ENCODE measurements at regions of chr5 and their contacts with region 1.

Region 1: GRCh38 chr5:57221049-57221568 is 47.2 kb downstream of the GPBP1 start:
- DNase-seq: peak; percentile 42
- ATAC-seq: peak; percentile 82
- H3K4me3 ChIP-seq: no peak overlapping the region
- H3K27ac ChIP-seq: no peak overlapping the region
- H3K4me1 ChIP-seq: no peaks in the 10 kb centered on the region
- H3K27me3 ChIP-seq: no peaks in the 10 kb centered on the region
- CTCF ChIP-seq: peak; percentile 66 to 75 (median 67)
- EP300 ChIP-seq: no peak
- POLR2A ChIP-seq: no peak
- RAD21 ChIP-seq: peak; percentile 93

Region 2: GRCh38 chr5:56900858-56901578 is 320.1 kb before region 1 on chr5:
- CTCF ChIA-PET with region 1: interaction called, 21 read pairs
- POLR2A ChIA-PET with region 1: no interaction called
- RAD21 ChIA-PET with region 1: interaction called, 6 read pairs
- SMC1A ChIA-PET with region 1: interaction called, 14 read pairs
- in situ Hi-C with region 1: loop called (anchors 5 kb)
- intact Hi-C with region 1: loop called (anchors 1 kb)
- DNase-seq: no peak
- ATAC-seq: peak; percentile 88
- H3K4me3 ChIP-seq: no peak overlapping the region
- H3K27ac ChIP-seq: no peak overlapping the region
- H3K4me1 ChIP-seq: no peaks in the 10 kb centered on the region
- H3K27me3 ChIP-seq: no peaks in the 10 kb centered on the region; a peak in 1 of 4 replicates
- CTCF ChIP-seq: peak; percentile 60 to 83 (median 75); a peak in 5 of 6 replicates
- EP300 ChIP-seq: no peak
- POLR2A ChIP-seq: no peak
- RAD21 ChIP-seq: peak; percentile 89

Region 3: GRCh38 chr5:56909294-56910209 is 311.6 kb before region 1 on chr5 and contains the start of gene SETD9:
- CTCF ChIA-PET with region 1: interaction called, 10 read pairs
- POLR2A ChIA-PET with region 1: no interaction called
- RAD21 ChIA-PET with region 1: interaction called, 3 read pairs
- SMC1A ChIA-PET with region 1: interaction called, 10 read pairs
- in situ Hi-C with region 1: loop called (anchors 5 kb)
- intact Hi-C with region 1: loop called (anchors 2 kb)
- DNase-seq: peak; percentile 86
- ATAC-seq: peak; percentile 90
- H3K4me3 ChIP-seq: peak within 1 kb of the TSS; percentile 79
- H3K27ac ChIP-seq: peak within 1 kb of the TSS; percentile 91
- H3K4me1 ChIP-seq: peaks cover 7% of the 10 kb centered on the region
- H3K27me3 ChIP-seq: no peaks in the 10 kb centered on the region
- CTCF ChIP-seq: no peak
- EP300 ChIP-seq: no peak
- POLR2A ChIP-seq: peak; percentile 98
- RAD21 ChIP-seq: no peak
- polyA plus RNA-seq, gene SETD9: 12.9 to 17.1 TPM

Region 4: DNA sequence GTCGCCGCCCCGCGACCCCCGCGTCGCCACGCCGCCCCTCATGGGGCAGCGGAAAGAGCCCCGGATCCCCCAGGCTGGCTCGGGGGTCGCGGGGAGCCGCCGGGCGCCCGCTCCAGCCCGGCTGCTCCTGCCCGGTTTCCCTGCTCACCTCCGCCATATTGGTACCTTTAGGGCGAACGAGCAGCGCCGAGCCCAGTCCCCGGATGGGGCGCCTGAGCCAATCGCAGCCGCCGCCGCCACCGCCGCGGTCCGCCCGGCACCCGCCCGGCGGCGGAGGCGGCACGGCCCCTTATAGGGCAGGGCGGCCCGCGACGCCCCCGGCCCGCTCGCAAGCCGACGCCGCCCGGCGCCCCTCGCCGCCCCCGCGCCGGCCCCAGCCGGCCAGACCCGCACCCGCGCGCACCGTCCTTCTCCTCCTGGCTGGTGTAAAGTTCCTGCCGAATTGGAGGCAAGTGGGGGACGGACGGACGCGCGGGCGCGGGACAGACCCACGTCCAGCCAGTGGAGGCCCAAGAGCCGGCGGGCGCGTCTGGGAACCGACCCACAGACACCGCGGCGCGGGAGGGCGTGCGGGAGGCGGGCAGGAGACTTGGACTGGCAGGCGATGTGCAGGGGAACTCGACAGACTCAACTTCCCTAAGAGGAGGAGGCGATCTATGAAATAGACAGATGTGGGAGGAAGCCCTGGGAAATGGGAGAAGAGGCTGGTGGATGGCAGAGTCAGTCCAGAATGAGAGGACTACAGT is 269.0 kb before region 1 on chr5 and contains the start of gene MIER3:
- CTCF ChIA-PET with region 1: interaction called, 3 read pairs
- POLR2A ChIA-PET with region 1: interaction called, 4 read pairs
- RAD21 ChIA-PET with region 1: interaction called, 3 read pairs
- SMC1A ChIA-PET with region 1: interaction called, 3 read pairs
- in situ Hi-C with region 1: no loop called
- intact Hi-C with region 1: loop called (anchors 5 kb)
- DNase-seq: no peak
- ATAC-seq: peak; percentile 90
- H3K4me3 ChIP-seq: peak within 1 kb of the TSS; percentile 90
- H3K27ac ChIP-seq: peak within 1 kb of the TSS; percentile 63
- H3K4me1 ChIP-seq: no peaks in the 10 kb centered on the region
- H3K27me3 ChIP-seq: no peaks in the 10 kb centered on the region; a peak in 1 of 4 replicates
- CTCF ChIP-seq: no peak
- EP300 ChIP-seq: no peak
- POLR2A ChIP-seq: peak; percentile 83
- RAD21 ChIP-seq: no peak
- polyA plus RNA-seq, gene MIER3: 2.9 to 3.5 TPM

Region 5: GRCh38 chr5:57173185-57174127 is 47.7 kb before region 1 on chr5 and contains the start of gene GPBP1:
- CTCF ChIA-PET with region 1: interaction called, 16 read pairs
- POLR2A ChIA-PET with region 1: interaction called, 4 read pairs
- RAD21 ChIA-PET with region 1: interaction called, 20 read pairs
- SMC1A ChIA-PET with region 1: interaction called, 18 read pairs
- in situ Hi-C with region 1: no loop called
- intact Hi-C with region 1: loop called (anchors 1 kb)
- DNase-seq: peak; percentile 94
- ATAC-seq: peak; percentile 72
- H3K4me3 ChIP-seq: peak within 1 kb of the TSS; percentile 87
- H3K27ac ChIP-seq: peak within 1 kb of the TSS; percentile 99
- H3K4me1 ChIP-seq: no peaks in the 10 kb centered on the region
- H3K27me3 ChIP-seq: no peaks in the 10 kb centered on the region
- CTCF ChIP-seq: no peak
- EP300 ChIP-seq: peak; percentile 68 to 72; a peak in 2 of 4 replicates
- POLR2A ChIP-seq: peak; percentile 77
- RAD21 ChIP-seq: no peak
- polyA plus RNA-seq, gene GPBP1: 27.0 to 32.5 TPM

Region 6: DNA sequence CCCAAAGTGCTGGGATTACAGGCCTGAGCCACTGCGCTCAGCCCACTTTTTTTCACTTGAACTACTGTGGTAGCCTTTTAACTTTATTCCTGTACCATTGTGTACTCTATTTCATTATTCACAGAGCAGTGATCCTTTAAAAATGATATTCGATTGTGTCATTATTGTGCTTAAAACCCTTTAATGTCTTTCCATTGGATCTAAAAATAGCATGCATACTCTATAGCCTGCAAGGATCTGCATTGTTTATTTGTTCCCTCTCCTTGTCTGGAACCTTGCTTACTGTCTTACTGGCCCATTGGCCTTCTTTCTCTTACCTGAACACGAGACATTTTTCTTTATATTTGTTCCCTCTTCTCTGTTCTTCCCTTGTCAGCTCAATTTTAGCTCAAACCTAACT is 31.6 kb before region 1 on chr5:
- CTCF ChIA-PET with region 1: interaction called, 16 read pairs
- POLR2A ChIA-PET with region 1: interaction called, 9 read pairs
- RAD21 ChIA-PET with region 1: interaction called, 15 read pairs
- SMC1A ChIA-PET with region 1: interaction called, 5 read pairs
- in situ Hi-C with region 1: no loop called
- intact Hi-C with region 1: no loop called
- DNase-seq: no peak
- ATAC-seq: no peak
- H3K4me3 ChIP-seq: no peak overlapping the region
- H3K27ac ChIP-seq: no peak overlapping the region
- H3K4me1 ChIP-seq: peaks cover 38% of the 10 kb centered on the region
- H3K27me3 ChIP-seq: no peaks in the 10 kb centered on the region
- CTCF ChIP-seq: no peak
- EP300 ChIP-seq: no peak
- POLR2A ChIP-seq: no peak
- RAD21 ChIP-seq: no peak

Region 7: DNA sequence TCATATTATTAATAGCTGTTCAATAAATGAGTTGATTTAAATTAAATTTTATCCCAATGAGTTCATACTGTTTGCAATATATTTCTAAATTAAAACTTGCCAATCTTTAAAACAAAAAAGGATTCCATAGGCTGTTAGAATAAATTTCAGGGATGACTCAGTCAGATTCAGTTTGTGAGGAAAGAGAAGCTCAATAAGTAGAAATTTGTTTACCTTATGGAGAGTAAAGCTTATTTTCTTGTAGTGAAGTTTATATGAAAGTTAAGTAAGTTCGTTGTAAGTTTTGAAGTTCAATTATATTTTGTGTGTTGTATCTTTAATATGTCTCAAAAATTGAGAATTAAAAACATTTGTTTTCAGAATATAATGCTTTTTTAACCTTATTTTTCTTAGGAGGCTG is 18.3 kb before region 1 on chr5:
- CTCF ChIA-PET with region 1: interaction called, 10 read pairs
- POLR2A ChIA-PET with region 1: interaction called, 3 read pairs
- RAD21 ChIA-PET with region 1: interaction called, 4 read pairs
- SMC1A ChIA-PET with region 1: interaction called, 7 read pairs
- in situ Hi-C with region 1: no loop called
- intact Hi-C with region 1: no loop called
- DNase-seq: no peak
- ATAC-seq: no peak
- H3K4me3 ChIP-seq: no peak overlapping the region
- H3K27ac ChIP-seq: no peak overlapping the region
- H3K4me1 ChIP-seq: peaks cover 3% of the 10 kb centered on the region; the same call in 1 of the 2 replicates
- H3K27me3 ChIP-seq: no peaks in the 10 kb centered on the region
- CTCF ChIP-seq: no peak
- EP300 ChIP-seq: no peak
- POLR2A ChIP-seq: no peak
- RAD21 ChIP-seq: no peak

Region 8: GRCh38 chr5:57277085-57277484 is 56.0 kb after region 1 on chr5:
- CTCF ChIA-PET with region 1: no interaction called
- POLR2A ChIA-PET with region 1: no interaction called
- RAD21 ChIA-PET with region 1: no interaction called
- SMC1A ChIA-PET with region 1: no interaction called
- in situ Hi-C with region 1: no loop called
- intact Hi-C with region 1: no loop called
- DNase-seq: no peak
- ATAC-seq: no peak
- H3K4me3 ChIP-seq: no peak overlapping the region
- H3K27ac ChIP-seq: no peak overlapping the region
- H3K4me1 ChIP-seq: no peaks in the 10 kb centered on the region
- H3K27me3 ChIP-seq: no peaks in the 10 kb centered on the region
- CTCF ChIP-seq: peak in 2 of 3 experiments; percentile 16 to 31; a peak in 2 of 6 replicates
- EP300 ChIP-seq: no peak
- POLR2A ChIP-seq: no peak
- RAD21 ChIP-seq: peak; percentile 41